MCF 10A (cell line): ENCODE measurements at regions of chr4 and their contacts with region 1.

Region 1: GRCh38 chr4:159298502-159298901 is 195.6 kb downstream of the RAPGEF2 start:
- DNase-seq: peak; percentile 67
- H3K4me3 Mint-ChIP-seq: peak overlapping the region; percentile 67
- H3K27ac Mint-ChIP-seq: peak overlapping the region; percentile 72
- H3K4me1 Mint-ChIP-seq: peaks cover 33% of the 10 kb centered on the region
- H3K27me3 Mint-ChIP-seq: no peaks in the 10 kb centered on the region
- CTCF ChIP-seq: no peak

Region 2: DNA sequence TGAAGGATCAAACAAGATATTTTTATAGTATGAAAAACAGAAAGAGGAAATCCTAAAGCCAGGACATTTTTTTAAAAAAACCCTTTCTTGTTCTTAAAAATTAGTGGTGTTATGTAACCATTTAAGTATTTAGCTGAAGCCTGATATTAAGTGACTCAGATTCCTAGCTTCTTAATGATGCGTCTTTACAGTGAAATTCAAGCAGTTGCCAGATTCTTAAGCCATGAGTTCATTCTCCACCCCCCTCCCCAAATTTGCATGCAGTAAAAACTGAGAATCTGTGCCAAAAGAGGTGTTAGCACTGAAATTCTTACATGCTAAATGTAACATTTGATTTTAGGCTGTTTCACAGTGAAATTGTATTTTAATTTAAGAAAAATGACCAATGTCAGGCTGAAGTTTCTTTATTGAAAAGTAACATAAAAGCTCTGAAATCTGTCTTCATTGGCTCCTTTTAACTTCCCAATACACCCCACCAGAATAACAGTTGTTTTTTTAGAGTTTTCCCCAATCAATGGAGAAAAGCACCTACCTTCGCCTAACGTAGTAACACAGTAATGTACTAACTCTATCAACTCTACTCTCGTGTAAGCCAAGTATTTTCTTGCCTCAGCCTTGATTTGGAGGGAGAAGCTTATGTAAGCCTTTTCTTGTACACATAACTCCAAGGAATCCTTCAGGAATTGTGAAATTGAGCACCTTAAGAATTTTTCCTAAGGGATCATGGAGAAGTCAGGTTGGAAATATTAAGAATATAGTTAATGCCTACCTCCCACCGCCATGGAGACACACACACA is 14.6 kb before region 1 on chr4:
- CTCF ChIA-PET with region 1: interaction called, 3 read pairs
- POLR2A ChIA-PET with region 1: interaction called, 30 read pairs
- intact Hi-C with region 1: no loop called
- DNase-seq: peak; percentile 40
- H3K4me3 Mint-ChIP-seq: peak overlapping the region; percentile 28
- H3K27ac Mint-ChIP-seq: no peak overlapping the region
- H3K4me1 Mint-ChIP-seq: peaks cover 18% of the 10 kb centered on the region
- H3K27me3 Mint-ChIP-seq: no peaks in the 10 kb centered on the region
- CTCF ChIP-seq: no peak